Caco-2 (cell line): ENCODE measurements at regions of chr17 and their contacts with region 1.

Region 1: GRCh38 chr17:49022391-49022941 is 25.3 kb downstream of the IGF2BP1 start:
- DNase-seq: peak; percentile 98 to 99
- H3K4me3 ChIP-seq: no peak overlapping the region
- H3K4me3 Mint-ChIP-seq: peak overlapping the region; percentile 44
- H3K27ac Mint-ChIP-seq: peak overlapping the region; percentile 87
- H3K4me1 ChIP-seq: peaks cover 83% of the 10 kb centered on the region
- H3K4me1 Mint-ChIP-seq: peaks cover 86% of the 10 kb centered on the region
- H3K27me3 ChIP-seq: no peaks in the 10 kb centered on the region
- H3K27me3 Mint-ChIP-seq: no peaks in the 10 kb centered on the region
- CTCF ChIP-seq: no peak

Region 2: GRCh38 chr17:48860034-48860433 is 162.4 kb before region 1 on chr17:
- CTCF ChIA-PET with region 1: no interaction called
- POLR2A ChIA-PET with region 1: interaction called, 10 read pairs
- intact Hi-C with region 1: no loop called
- DNase-seq: peak in 1 of 2 experiments; percentile 40
- H3K4me3 ChIP-seq: no peak overlapping the region
- H3K4me3 Mint-ChIP-seq: no peak overlapping the region
- H3K27ac Mint-ChIP-seq: no peak overlapping the region
- H3K4me1 ChIP-seq: peaks cover 5% of the 10 kb centered on the region
- H3K4me1 Mint-ChIP-seq: peaks cover 3% of the 10 kb centered on the region
- H3K27me3 ChIP-seq: no peaks in the 10 kb centered on the region
- H3K27me3 Mint-ChIP-seq: no peaks in the 10 kb centered on the region
- CTCF ChIP-seq: peak; percentile 56 to 78

Region 3: DNA sequence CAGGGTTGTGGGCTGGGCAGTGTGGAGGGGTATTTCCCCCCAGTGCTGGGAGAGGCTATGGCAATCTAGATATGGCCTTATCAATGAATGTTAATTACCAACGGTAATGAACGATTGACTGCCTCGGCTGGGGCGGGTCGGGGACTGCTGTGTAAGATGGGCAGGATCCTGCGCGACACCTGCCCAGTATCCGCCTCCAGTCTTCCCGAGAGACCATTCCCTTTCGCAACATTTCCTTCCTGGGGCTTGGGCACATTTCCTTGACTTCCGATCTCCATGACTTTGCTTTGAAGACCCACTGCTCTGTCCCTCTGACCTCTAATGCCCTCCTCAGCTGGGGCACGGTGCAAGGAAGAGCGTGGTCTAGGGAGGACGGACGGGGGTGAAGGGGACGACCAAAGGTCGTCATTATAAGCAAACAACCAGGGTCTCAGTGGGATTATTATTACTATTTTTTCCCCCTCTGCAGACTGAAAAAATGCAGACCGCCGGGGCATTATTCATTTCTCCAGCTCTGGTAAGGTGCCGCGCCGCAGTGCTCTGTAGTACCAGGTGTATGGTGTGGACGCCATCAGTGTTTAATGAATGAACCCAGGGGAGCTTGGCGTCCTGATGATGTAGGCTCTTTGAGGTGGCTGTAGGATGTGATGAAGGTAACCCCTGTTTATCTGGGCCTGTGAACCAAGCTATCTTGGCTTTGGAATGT is 129.4 kb before region 1 on chr17:
- CTCF ChIA-PET with region 1: no interaction called
- POLR2A ChIA-PET with region 1: interaction called, 9 read pairs
- intact Hi-C with region 1: loop called (anchors 1 kb)
- DNase-seq: no peak
- H3K4me3 ChIP-seq: peak overlapping the region; percentile 73
- H3K4me3 Mint-ChIP-seq: peak overlapping the region; percentile 84
- H3K27ac Mint-ChIP-seq: peak overlapping the region; percentile 90
- H3K4me1 ChIP-seq: peaks cover 13% of the 10 kb centered on the region
- H3K4me1 Mint-ChIP-seq: peaks cover 12% of the 10 kb centered on the region
- H3K27me3 ChIP-seq: no peaks in the 10 kb centered on the region
- H3K27me3 Mint-ChIP-seq: peaks cover 2% of the 10 kb centered on the region
- CTCF ChIP-seq: no peak

Region 4: GRCh38 chr17:48928876-48929811 is 93.3 kb before region 1 on chr17:
- CTCF ChIA-PET with region 1: no interaction called
- POLR2A ChIA-PET with region 1: no interaction called
- intact Hi-C with region 1: no loop called
- DNase-seq: no peak
- H3K4me3 ChIP-seq: no peak overlapping the region
- H3K4me3 Mint-ChIP-seq: no peak overlapping the region
- H3K27ac Mint-ChIP-seq: no peak overlapping the region
- H3K4me1 ChIP-seq: no peaks in the 10 kb centered on the region
- H3K4me1 Mint-ChIP-seq: no peaks in the 10 kb centered on the region
- H3K27me3 ChIP-seq: no peaks in the 10 kb centered on the region
- H3K27me3 Mint-ChIP-seq: no peaks in the 10 kb centered on the region
- CTCF ChIP-seq: no peak

Region 5: GRCh38 chr17:48954300-48954755 is 68.1 kb before region 1 on chr17:
- CTCF ChIA-PET with region 1: interaction called, 5 read pairs
- POLR2A ChIA-PET with region 1: interaction called, 3 read pairs
- intact Hi-C with region 1: loop called (anchors 2 kb)
- DNase-seq: peak; percentile 89 to 91
- H3K4me3 ChIP-seq: no peak overlapping the region
- H3K4me3 Mint-ChIP-seq: no peak overlapping the region
- H3K27ac Mint-ChIP-seq: peak overlapping the region; percentile 47
- H3K4me1 ChIP-seq: peaks cover 13% of the 10 kb centered on the region
- H3K4me1 Mint-ChIP-seq: peaks cover 10% of the 10 kb centered on the region
- H3K27me3 ChIP-seq: no peaks in the 10 kb centered on the region
- H3K27me3 Mint-ChIP-seq: no peaks in the 10 kb centered on the region
- CTCF ChIP-seq: peak; percentile 94 to 97

Region 6: DNA sequence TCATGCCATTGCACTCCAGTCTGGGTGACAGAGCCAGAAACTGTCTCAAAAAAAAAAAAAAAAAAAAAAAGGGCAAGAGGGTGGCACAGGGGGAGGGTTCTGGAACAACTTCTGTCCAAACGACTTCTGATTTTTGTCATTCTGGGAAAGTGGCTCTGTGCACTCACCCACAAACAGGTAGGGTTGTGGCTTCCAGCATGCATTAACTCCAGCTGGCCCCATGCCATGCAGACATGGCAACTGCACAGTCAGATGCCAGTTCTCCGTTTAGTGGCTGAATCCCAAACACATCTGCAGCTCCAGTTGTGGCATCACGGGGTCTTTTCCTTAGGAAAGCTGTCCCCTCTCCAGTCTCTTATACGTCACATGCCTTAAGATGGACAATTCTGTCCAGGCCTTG is 140.4 kb after region 1 on chr17:
- CTCF ChIA-PET with region 1: no interaction called
- POLR2A ChIA-PET with region 1: no interaction called
- intact Hi-C with region 1: no loop called
- DNase-seq: no peak
- H3K4me3 ChIP-seq: no peak overlapping the region
- H3K4me3 Mint-ChIP-seq: no peak overlapping the region
- H3K27ac Mint-ChIP-seq: no peak overlapping the region
- H3K4me1 ChIP-seq: peaks cover 7% of the 10 kb centered on the region
- H3K4me1 Mint-ChIP-seq: peaks cover 10% of the 10 kb centered on the region
- H3K27me3 ChIP-seq: no peaks in the 10 kb centered on the region
- H3K27me3 Mint-ChIP-seq: peaks cover 8% of the 10 kb centered on the region
- CTCF ChIP-seq: no peak